HAP-1 (cell line): ENCODE measurements at regions of chr15 and their contacts with region 1.

Region 1: GRCh38 chr15:34337557-34338306 is at the start of gene SLC12A6:
- DNase-seq: peak; percentile 88 to 95
- H3K4me3 ChIP-seq: peak within 1 kb of the TSS; percentile 75
- H3K4me1 ChIP-seq: peaks cover 28% of the 10 kb centered on the region
- H3K27me3 ChIP-seq: no peaks in the 10 kb centered on the region

Region 2: DNA sequence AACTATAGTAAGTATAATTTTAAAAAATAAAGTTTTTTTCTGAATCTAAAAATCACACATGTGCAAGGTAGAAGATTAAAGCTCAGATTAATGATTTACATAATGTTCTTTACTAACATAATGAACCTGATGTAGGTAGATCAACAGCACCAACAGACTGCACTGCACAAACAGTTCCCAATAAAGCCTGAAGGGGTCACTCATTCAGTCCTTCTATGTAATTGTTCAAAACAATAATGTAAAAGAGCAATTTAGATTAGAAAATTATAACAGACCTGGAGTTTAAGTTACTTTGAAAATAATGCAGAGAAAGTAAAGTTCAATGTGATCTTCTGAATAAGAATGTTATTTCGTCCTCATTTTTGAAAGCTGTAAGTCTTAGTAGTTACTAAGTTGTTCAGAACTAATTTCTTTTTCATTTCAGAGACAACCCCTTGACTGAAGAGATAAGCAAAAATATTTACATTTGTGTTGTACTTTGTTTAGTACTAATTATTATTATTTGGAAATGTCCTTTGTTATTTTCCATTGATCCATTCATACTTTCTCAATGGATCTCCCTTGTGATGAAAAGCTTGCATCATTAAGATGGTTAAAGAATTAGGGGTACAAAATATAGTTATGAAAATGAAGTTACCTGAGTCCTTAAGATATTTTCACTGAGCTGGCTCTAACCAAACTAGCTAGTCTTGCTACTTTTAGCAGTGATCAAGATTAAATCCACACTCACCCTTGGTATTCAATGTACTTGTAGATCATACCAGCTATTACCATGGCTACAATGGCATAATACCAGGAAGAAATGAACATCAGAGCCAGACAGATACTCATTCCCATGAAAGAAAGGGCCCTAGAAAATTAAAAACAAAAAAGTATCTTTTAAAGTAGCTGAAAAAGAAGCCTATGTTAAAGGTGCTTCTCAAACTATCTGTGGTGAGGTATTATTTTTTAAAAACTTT is 96.1 kb before region 1 on chr15:
- in situ Hi-C with region 1: loop called (anchors 5 kb)
- DNase-seq: peak; percentile 26 to 32
- H3K4me3 ChIP-seq: no peak overlapping the region
- H3K4me1 ChIP-seq: peaks cover 2% of the 10 kb centered on the region; the same call in 1 of the 2 replicates
- H3K27me3 ChIP-seq: no peaks in the 10 kb centered on the region